Activated CD4-positive, alpha-beta T cell treated with anti-CD3 and anti-CD28 coated beads, Interleukin-2, amount 10 ng/mL, durations not matched to agents 24 days and 14 days (primary cell): ENCODE measurements at regions of chrX and their contacts with region 1.

Region 1: GRCh38 chrX:15815779-15816437 is 25.6 kb downstream of the ZRSR2 start:
- DNase-seq: peak; percentile 76
- H3K4me3 Mint-ChIP-seq: no peak overlapping the region
- H3K27ac Mint-ChIP-seq: peak overlapping the region; percentile 52
- H3K4me1 Mint-ChIP-seq: peaks cover 36% of the 10 kb centered on the region
- H3K27me3 Mint-ChIP-seq: no peaks in the 10 kb centered on the region

Region 2: DNA sequence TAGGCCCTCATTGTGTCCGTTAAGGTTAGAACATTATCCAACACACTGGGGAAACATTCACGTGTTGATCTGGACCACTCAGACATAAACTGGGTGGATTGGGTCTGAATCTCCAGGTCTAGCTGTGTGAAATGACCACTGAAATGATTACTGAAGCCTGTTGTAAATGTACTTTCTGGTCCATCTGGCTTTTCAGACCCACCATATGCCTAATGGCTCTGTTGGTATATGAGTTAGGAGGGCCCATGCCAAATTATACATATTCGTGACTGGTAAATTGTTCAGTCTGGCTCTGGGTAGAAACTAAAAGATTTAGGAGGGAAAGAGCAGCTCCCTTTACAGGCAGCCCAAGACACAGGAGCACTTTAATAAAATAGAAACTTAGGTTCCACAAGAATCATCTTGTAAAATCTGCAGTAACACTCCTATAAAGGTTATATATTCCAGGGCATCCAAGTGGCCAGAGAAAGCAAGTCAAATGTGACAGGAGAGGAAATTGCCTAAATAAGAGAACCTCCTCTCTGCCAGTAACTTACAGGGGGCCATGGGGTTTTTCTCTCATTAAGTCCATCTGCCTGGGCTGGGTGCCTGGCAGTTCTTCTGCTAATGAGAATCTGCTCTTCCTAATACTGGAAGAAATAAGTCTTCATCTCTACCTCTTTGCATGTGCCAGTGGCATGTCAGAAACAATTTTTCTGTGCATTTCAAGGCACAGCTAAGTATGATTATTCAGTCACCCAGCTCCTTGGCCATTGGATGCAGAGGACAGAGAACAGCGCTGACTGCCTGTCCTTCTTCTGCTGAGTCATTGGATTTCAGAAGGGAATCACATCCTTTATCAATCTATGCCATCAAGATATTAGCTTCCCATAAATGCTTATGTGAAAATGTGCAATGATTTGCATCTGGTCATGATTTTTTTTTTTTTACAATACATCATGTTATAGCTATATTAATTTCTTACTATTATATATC is 1173.9 kb before region 1 on chrX:
- intact Hi-C with region 1: no loop called
- DNase-seq: no peak
- H3K4me3 Mint-ChIP-seq: no peak overlapping the region
- H3K27ac Mint-ChIP-seq: no peak overlapping the region
- H3K4me1 Mint-ChIP-seq: no peaks in the 10 kb centered on the region
- H3K27me3 Mint-ChIP-seq: no peaks in the 10 kb centered on the region

Region 3: DNA sequence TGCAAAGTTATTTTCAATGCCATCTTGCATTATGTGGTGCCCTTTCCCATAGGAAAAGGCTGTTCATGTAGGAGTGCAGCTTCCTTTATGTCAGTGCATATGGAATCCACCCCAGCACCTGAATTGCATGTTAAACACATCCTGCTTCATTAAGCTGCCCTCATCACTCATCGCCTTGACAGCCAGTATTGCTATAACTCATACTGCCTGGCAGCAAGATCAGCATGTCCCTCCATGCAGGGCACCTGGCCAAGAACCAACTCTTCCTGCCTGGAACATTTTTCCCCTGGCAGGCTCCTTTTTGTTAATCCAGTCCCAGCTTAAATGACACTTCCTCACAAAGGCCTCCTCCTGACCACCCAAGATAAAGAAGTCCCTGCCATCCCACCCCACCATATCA is 101.4 kb before region 1 on chrX:
- intact Hi-C with region 1: no loop called
- DNase-seq: no peak
- H3K4me3 Mint-ChIP-seq: no peak overlapping the region
- H3K27ac Mint-ChIP-seq: no peak overlapping the region
- H3K4me1 Mint-ChIP-seq: peaks cover 2% of the 10 kb centered on the region
- H3K27me3 Mint-ChIP-seq: no peaks in the 10 kb centered on the region

Region 4: GRCh38 chrX:15749642-15750610 is 66.0 kb before region 1 on chrX:
- intact Hi-C with region 1: loop called (anchors 2 kb)
- DNase-seq: peak; percentile 76
- H3K4me3 Mint-ChIP-seq: peak overlapping the region; percentile 76
- H3K27ac Mint-ChIP-seq: peak overlapping the region; percentile 92
- H3K4me1 Mint-ChIP-seq: peaks cover 36% of the 10 kb centered on the region
- H3K27me3 Mint-ChIP-seq: no peaks in the 10 kb centered on the region

Region 5: DNA sequence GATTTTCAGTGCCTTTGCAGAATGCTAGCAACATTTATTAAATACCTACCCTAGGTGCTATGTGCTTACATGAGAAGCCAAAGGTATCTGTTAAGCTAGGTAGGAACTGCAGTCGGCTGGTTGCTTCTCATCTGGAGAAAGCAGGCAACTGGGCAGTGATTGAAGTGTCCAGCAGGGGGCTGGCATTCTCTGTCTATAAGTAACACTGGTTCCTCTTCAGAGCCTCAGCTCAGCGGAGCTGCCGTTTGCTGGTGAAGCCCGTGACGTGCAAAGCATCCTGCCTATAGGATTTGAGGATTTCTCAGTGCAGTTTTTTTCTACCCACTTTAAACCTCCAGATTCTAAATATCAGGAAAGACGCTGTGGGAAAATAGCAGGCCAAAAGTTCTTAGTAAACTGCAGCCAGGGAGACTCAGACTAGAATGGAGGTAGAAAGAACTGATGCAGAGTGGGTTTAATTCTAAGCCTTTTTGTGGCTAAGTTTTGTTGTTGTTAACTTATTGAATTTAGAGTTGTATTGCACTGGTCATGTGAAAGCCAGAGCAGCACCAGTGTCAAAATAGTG is 307.4 kb after region 1 on chrX and contains the start of gene GRPR:
- intact Hi-C with region 1: loop called (anchors 1 kb)
- DNase-seq: peak; percentile 80
- H3K4me3 Mint-ChIP-seq: no peak within 1 kb of the TSS
- H3K27ac Mint-ChIP-seq: no peak within 1 kb of the TSS
- H3K4me1 Mint-ChIP-seq: peaks cover 17% of the 10 kb centered on the region
- H3K27me3 Mint-ChIP-seq: peaks cover 24% of the 10 kb centered on the region
- total RNA-seq, gene GRPR: not detected in 2 replicates